ENCODE measurements at regions of chr2 and their contacts with region 1.

Region 1: GRCh38 chr2:27723372-27724144 is 48.0 kb upstream of the MRPL33 start:
- DNase-seq: peak; percentile 53
- H3K4me3 ChIP-seq: no peak overlapping the region
- H3K27ac ChIP-seq: no peak overlapping the region
- H3K4me1 ChIP-seq: peaks cover 32% of the 10 kb centered on the region
- H3K27me3 ChIP-seq: no peaks in the 10 kb centered on the region
- CTCF ChIP-seq: peak; percentile 78 to 89

Region 2: GRCh38 chr2:27737676-27738348 is 14.3 kb after region 1 on chr2:
- CTCF ChIA-PET with region 1: no interaction called
- dilution Hi-C with region 1: no loop called
- in situ Hi-C with region 1: no loop called
- intact Hi-C with region 1: loop called (anchors 2 kb)
- DNase-seq: peak; percentile 74
- H3K4me3 ChIP-seq: no peak overlapping the region
- H3K27ac ChIP-seq: no peak overlapping the region
- H3K4me1 ChIP-seq: peaks cover 15% of the 10 kb centered on the region
- H3K27me3 ChIP-seq: no peaks in the 10 kb centered on the region
- CTCF ChIP-seq: no peak

Region 3: GRCh38 chr2:28137221-28137620 is 413.7 kb after region 1 on chr2:
- CTCF ChIA-PET with region 1: no interaction called
- dilution Hi-C with region 1: no loop called
- in situ Hi-C with region 1: no loop called
- intact Hi-C with region 1: no loop called
- DNase-seq: peak; percentile 20
- H3K4me3 ChIP-seq: no peak overlapping the region
- H3K27ac ChIP-seq: no peak overlapping the region
- H3K4me1 ChIP-seq: peaks cover 12% of the 10 kb centered on the region
- H3K27me3 ChIP-seq: no peaks in the 10 kb centered on the region
- CTCF ChIP-seq: no peak